Naive thymus-derived CD4-positive, alpha-beta T cell (primary cell): ENCODE measurements at regions of chr1 and their contacts with region 1.

Region 1: GRCh38 chr1:108897865-108898720 is 21.3 kb downstream of the GPSM2 start:
- DNase-seq: peak in 7 of 9 donors; percentile 30 to 67 (median 54)
- ATAC-seq: peak; percentile 82
- H3K4me3 ChIP-seq: no peak overlapping the region
- H3K4me3 Mint-ChIP-seq: no peak overlapping the region
- H3K27ac ChIP-seq: no peak overlapping the region
- H3K27ac Mint-ChIP-seq: no peak overlapping the region
- H3K4me1 ChIP-seq: no peaks in the 10 kb centered on the region
- H3K4me1 Mint-ChIP-seq: peaks cover 0 to 4% (median 1%) of the 10 kb centered on the region in 7 donors
- H3K27me3 ChIP-seq: no peaks in the 10 kb centered on the region
- H3K27me3 Mint-ChIP-seq: peaks cover 0 to 4% (median 3%) of the 10 kb centered on the region in 5 donors

Region 2: DNA sequence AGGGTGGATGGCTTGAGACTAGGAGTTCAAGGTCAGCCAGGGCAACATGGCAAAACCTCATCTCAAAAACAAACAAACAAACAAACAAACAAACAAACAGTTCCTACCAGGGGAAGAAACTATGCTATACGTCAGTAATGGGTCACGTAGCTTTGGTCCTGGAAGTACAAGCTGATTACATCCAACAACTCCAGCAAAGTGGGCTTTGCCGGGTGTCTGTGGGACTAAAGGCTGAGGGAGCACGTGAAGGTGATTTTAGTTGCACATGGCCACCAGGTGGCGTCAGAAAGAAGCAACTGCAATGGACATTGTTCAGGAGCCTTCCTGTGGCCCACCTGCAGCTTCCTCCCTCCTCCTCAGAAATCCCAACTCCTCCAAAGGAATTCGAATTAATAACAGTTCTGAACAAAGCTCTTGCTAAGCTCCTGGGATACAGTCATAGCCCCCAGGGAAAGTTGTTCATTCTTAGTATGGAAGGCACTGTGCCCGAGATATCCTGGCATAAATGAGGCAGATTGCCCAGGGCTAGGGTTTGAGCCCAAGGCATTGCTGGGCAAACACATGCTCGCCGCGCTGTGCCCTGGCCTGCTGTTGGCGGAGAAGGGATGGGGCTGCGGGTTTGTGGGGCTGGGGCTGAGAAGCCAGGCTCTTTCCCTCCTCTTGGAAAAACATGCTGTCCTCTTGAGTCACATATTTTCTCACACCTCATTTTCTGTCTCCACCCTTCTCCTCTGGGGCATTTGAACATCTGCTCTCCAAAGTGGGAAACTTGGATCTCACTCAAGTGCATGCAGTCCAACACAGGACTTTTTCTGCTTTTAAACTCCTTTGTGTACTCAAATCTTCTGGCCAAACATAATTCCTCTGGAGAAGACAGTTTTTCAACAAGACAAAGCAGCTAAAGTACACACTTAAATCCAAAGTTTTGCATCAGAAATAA is 69.8 kb before region 1 on chr1:
- CTCF ChIA-PET with region 1: interaction called, 65 read pairs
- POLR2A ChIA-PET with region 1: no interaction called
- intact Hi-C with region 1: loop called (anchors 1 kb)
- DNase-seq: peak; percentile 37 to 62 (median 46)
- ATAC-seq: peak; percentile 61
- H3K4me3 ChIP-seq: no peak overlapping the region
- H3K4me3 Mint-ChIP-seq: no peak overlapping the region
- H3K27ac ChIP-seq: no peak overlapping the region
- H3K27ac Mint-ChIP-seq: no peak overlapping the region
- H3K4me1 ChIP-seq: no peaks in the 10 kb centered on the region
- H3K4me1 Mint-ChIP-seq: peaks cover 0 to 9% (median 0%) of the 10 kb centered on the region in 7 donors
- H3K27me3 ChIP-seq: peaks cover 0 to 3% of the 10 kb centered on the region in 2 donors
- H3K27me3 Mint-ChIP-seq: peaks cover 0 to 12% (median 0%) of the 10 kb centered on the region in 5 donors

Region 3: GRCh38 chr1:108877348-108878159 is 20.5 kb before region 1 on chr1:
- CTCF ChIA-PET with region 1: interaction called, 3 read pairs
- POLR2A ChIA-PET with region 1: no interaction called
- intact Hi-C with region 1: loop called in 1 of 2 experiments (anchors 1 kb)
- DNase-seq: peak in 1 of 9 donors; percentile 0
- ATAC-seq: no peak
- H3K4me3 ChIP-seq: peak overlapping the region; percentile 68
- H3K4me3 Mint-ChIP-seq: peak overlapping the region; percentile 88 to 96 (median 92)
- H3K27ac ChIP-seq: peak overlapping the region; percentile 29
- H3K27ac Mint-ChIP-seq: peak overlapping the region in 7 of 9 donors; percentile 2 to 87 (median 58)
- H3K4me1 ChIP-seq: peaks cover 0 to 4% of the 10 kb centered on the region in 2 donors
- H3K4me1 Mint-ChIP-seq: peaks cover 0 to 27% (median 12%) of the 10 kb centered on the region in 7 donors
- H3K27me3 ChIP-seq: no peaks in the 10 kb centered on the region
- H3K27me3 Mint-ChIP-seq: peaks cover 3 to 17% (median 6%) of the 10 kb centered on the region in 5 donors

Region 4: GRCh38 chr1:108925920-108926319 is 27.8 kb after region 1 on chr1:
- CTCF ChIA-PET with region 1: no interaction called
- POLR2A ChIA-PET with region 1: no interaction called
- intact Hi-C with region 1: no loop called
- DNase-seq: no peak
- ATAC-seq: no peak
- H3K4me3 ChIP-seq: no peak overlapping the region
- H3K4me3 Mint-ChIP-seq: no peak overlapping the region
- H3K27ac ChIP-seq: no peak overlapping the region
- H3K27ac Mint-ChIP-seq: no peak overlapping the region
- H3K4me1 ChIP-seq: no peaks in the 10 kb centered on the region
- H3K4me1 Mint-ChIP-seq: no peaks in the 10 kb centered on the region
- H3K27me3 ChIP-seq: no peaks in the 10 kb centered on the region
- H3K27me3 Mint-ChIP-seq: no peaks in the 10 kb centered on the region

Region 5: GRCh38 chr1:109075531-109076490 is 177.7 kb after region 1 on chr1 and contains the start of gene TAF13:
- CTCF ChIA-PET with region 1: no interaction called
- POLR2A ChIA-PET with region 1: no interaction called
- intact Hi-C with region 1: no loop called
- DNase-seq: peak; percentile 75 to 89 (median 84)
- ATAC-seq: peak; percentile 100
- H3K4me3 ChIP-seq: peak within 1 kb of the TSS; percentile 80
- H3K4me3 Mint-ChIP-seq: peak within 1 kb of the TSS; percentile 89 to 99 (median 98)
- H3K27ac ChIP-seq: peak within 1 kb of the TSS; percentile 92
- H3K27ac Mint-ChIP-seq: peak within 1 kb of the TSS; percentile 95 to 100 (median 99)
- H3K4me1 ChIP-seq: peaks cover 5 to 8% of the 10 kb centered on the region in 2 donors
- H3K4me1 Mint-ChIP-seq: peaks cover 13 to 28% (median 20%) of the 10 kb centered on the region in 7 donors
- H3K27me3 ChIP-seq: no peaks in the 10 kb centered on the region
- H3K27me3 Mint-ChIP-seq: no peaks in the 10 kb centered on the region
- total RNA-seq, gene TAF13: 11.0 to 23.6 (median 17.6) TPM